ENCODE measurements at regions of chr1 and their contacts with region 1.

Region 1: GRCh38 chr1:228457396-228458176 is 29.6 kb upstream of the RNF187 start:
- DNase-seq: peak; percentile 95
- H3K4me3 ChIP-seq: peak overlapping the region; percentile 78 to 88
- H3K27ac ChIP-seq: peak overlapping the region; percentile 82 to 96
- H3K4me1 ChIP-seq: peaks cover 0 to 18% of the 10 kb centered on the region in 2 experiments; a peak in 2 of 4 replicates
- H3K27me3 ChIP-seq: no peaks in the 10 kb centered on the region
- CTCF ChIP-seq: peak; percentile 43
- EP300 ChIP-seq: no peak
- RAD21 ChIP-seq: no peak

Region 2: GRCh38 chr1:227762233-227762911 is 695.2 kb before region 1 on chr1:
- CTCF ChIA-PET with region 1: no interaction called
- POLR2A ChIA-PET with region 1: no interaction called
- DNase-seq: peak; percentile 97
- H3K4me3 ChIP-seq: peak overlapping the region in 1 of 2 experiments; percentile 30; a peak in 1 of 4 replicates
- H3K27ac ChIP-seq: no peak overlapping the region
- H3K4me1 ChIP-seq: peaks cover 15 to 27% of the 10 kb centered on the region in 2 experiments
- H3K27me3 ChIP-seq: no peaks in the 10 kb centered on the region
- CTCF ChIP-seq: peak; percentile 92
- EP300 ChIP-seq: no peak
- RAD21 ChIP-seq: peak; percentile 92

Region 3: DNA sequence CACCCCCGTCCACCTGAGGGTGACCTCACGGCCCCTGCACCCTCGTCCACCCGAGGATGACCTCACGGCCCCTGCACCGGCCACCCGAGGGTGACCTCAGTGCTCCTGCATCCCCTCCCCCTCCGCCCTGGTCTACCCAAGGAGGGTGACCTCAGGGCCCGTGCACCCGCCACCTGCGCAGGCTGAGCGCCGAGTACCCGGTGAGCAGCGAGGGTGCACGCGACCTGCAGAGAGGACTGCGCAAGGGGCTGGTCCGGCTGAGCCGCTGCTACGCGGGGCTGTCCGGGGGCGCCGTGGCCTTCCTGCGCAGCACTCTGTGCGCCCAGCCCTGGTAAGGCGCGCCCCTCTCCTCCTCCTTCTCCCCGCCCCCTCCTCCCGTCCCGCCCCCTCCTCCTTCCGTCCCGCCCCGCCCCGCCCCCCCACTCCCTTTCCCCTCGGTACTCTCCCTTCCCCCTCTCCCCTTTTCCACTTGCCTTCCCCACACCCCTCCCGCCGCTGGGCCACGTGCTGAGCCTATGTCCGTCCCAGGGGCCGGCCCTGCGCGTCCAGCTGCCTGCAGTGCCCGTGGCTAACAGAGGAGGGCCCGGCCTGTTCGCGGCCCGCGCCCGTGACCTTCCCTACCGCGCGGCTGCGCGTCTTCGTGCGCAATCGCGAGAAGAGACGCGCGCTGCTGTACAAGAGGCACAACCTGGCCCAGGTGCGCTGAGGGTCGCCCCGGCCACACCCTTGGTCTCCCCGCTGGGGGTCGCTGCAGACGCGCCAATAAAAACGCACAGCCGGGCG is 79.3 kb before region 1 on chr1:
- CTCF ChIA-PET with region 1: interaction called, 20 read pairs
- POLR2A ChIA-PET with region 1: interaction called, 5 read pairs
- DNase-seq: peak; percentile 96
- H3K4me3 ChIP-seq: peak overlapping the region; percentile 56 to 69
- H3K27ac ChIP-seq: peak overlapping the region in 1 of 2 experiments; percentile 3; a peak in 1 of 4 replicates
- H3K4me1 ChIP-seq: peaks cover 7 to 14% of the 10 kb centered on the region in 2 experiments; a peak in 2 of 4 replicates
- H3K27me3 ChIP-seq: no peaks in the 10 kb centered on the region
- CTCF ChIP-seq: peak; percentile 66
- EP300 ChIP-seq: no peak
- RAD21 ChIP-seq: peak; percentile 59

Region 4: DNA sequence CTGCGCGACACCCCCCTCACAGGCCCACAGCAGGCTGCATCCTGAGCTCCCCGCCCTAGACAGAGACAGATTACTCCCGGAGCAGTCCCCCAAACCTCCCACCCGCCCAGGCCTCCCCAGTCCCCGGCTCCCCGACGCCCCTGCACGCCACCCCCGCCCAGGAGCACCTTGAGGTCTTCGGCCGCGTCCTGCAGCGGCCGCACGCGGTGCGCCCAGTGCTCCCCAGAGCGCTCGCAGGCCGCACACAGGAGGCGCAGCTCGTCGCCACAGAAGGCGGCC is 51.7 kb before region 1 on chr1:
- CTCF ChIA-PET with region 1: interaction called, 10 read pairs
- POLR2A ChIA-PET with region 1: interaction called, 18 read pairs
- DNase-seq: no peak
- H3K4me3 ChIP-seq: peak overlapping the region; percentile 98 to 100
- H3K27ac ChIP-seq: peak overlapping the region in 1 of 2 experiments; percentile 85; a peak in 2 of 4 replicates
- H3K4me1 ChIP-seq: peaks cover 14 to 35% of the 10 kb centered on the region in 2 experiments
- H3K27me3 ChIP-seq: no peaks in the 10 kb centered on the region
- CTCF ChIP-seq: no peak
- EP300 ChIP-seq: no peak
- RAD21 ChIP-seq: no peak

Region 5: DNA sequence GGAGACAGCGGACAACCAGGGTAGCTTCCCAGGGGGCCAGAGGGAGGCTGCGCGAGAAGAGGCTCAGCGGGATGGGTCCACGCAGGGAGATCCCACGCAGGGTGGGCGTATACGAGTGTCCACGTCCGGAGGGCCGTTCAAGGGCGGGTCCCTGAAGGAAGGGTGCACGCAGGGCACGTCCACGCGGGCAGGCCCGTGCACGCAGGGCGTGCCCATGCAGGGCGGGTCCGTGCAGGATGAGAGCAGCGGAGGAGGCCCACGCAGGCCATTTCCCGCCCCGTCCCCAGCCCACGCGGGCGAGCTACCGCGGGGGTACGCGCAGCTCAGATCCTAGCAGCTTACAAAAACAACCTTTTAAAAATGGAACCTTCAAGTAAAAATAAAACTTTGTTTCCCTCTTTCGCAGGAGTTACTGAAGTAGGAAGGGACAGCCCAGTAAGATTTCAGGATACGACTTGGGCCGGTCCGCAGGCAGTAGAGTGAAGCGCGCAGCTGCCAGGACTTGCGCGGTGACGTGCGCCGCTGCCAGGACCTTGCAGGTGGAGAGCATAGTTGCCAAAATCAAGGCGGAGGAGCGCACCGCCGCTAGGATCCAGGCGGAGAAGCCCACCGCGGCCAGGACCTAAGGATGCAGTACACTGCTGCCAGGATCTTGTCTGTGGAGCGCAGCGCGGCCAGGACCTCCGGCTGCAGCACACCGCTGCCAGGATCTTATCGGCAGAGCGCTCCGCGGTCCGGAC is 29.2 kb after region 1 on chr1:
- CTCF ChIA-PET with region 1: interaction called, 11 read pairs
- POLR2A ChIA-PET with region 1: interaction called, 19 read pairs
- DNase-seq: peak; percentile 80
- H3K4me3 ChIP-seq: peak overlapping the region; percentile 79 to 96
- H3K27ac ChIP-seq: peak overlapping the region; percentile 90 to 97
- H3K4me1 ChIP-seq: peaks cover 0 to 10% of the 10 kb centered on the region in 2 experiments; a peak in 2 of 4 replicates
- H3K27me3 ChIP-seq: no peaks in the 10 kb centered on the region
- CTCF ChIP-seq: no peak
- EP300 ChIP-seq: no peak
- RAD21 ChIP-seq: no peak

Region 6: GRCh38 chr1:228500901-228501871 is 43.6 kb after region 1 on chr1:
- CTCF ChIA-PET with region 1: interaction called, 13 read pairs
- POLR2A ChIA-PET with region 1: interaction called, 4 read pairs
- DNase-seq: peak; percentile 84
- H3K4me3 ChIP-seq: peak overlapping the region in 1 of 2 experiments; percentile 24; a peak in 2 of 4 replicates
- H3K27ac ChIP-seq: no peak overlapping the region
- H3K4me1 ChIP-seq: peaks cover 0 to 7% of the 10 kb centered on the region in 2 experiments; a peak in 1 of 4 replicates
- H3K27me3 ChIP-seq: no peaks in the 10 kb centered on the region; the same call in 1 of the 2 replicates
- CTCF ChIP-seq: peak; percentile 94
- EP300 ChIP-seq: no peak
- RAD21 ChIP-seq: peak; percentile 77

Region 7: DNA sequence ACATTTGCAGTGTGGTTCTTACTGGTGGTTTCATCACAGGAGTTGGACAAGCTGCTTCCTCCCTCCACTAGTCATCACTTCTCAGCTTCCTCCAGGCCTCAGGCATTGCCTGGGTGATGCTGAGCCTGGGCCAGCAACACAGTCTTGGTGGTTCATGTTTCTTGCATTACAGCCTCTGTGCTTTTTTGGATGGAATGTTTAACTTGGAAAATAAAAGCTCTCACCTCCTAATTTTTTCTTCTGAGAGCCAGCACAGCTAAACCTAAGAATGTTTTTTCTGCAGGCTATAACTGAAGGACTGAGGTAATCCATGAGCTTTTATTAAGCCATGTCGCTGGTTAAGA is 211.6 kb after region 1 on chr1:
- CTCF ChIA-PET with region 1: no interaction called
- POLR2A ChIA-PET with region 1: no interaction called
- DNase-seq: no peak
- H3K4me3 ChIP-seq: no peak overlapping the region
- H3K27ac ChIP-seq: no peak overlapping the region
- H3K4me1 ChIP-seq: no peaks in the 10 kb centered on the region
- H3K27me3 ChIP-seq: no peaks in the 10 kb centered on the region
- CTCF ChIP-seq: no peak
- EP300 ChIP-seq: no peak
- RAD21 ChIP-seq: no peak